Uterus (tissue), 4 donors: ENCODE measurements at regions of chr7 and their contacts with region 1.

Region 1: DNA sequence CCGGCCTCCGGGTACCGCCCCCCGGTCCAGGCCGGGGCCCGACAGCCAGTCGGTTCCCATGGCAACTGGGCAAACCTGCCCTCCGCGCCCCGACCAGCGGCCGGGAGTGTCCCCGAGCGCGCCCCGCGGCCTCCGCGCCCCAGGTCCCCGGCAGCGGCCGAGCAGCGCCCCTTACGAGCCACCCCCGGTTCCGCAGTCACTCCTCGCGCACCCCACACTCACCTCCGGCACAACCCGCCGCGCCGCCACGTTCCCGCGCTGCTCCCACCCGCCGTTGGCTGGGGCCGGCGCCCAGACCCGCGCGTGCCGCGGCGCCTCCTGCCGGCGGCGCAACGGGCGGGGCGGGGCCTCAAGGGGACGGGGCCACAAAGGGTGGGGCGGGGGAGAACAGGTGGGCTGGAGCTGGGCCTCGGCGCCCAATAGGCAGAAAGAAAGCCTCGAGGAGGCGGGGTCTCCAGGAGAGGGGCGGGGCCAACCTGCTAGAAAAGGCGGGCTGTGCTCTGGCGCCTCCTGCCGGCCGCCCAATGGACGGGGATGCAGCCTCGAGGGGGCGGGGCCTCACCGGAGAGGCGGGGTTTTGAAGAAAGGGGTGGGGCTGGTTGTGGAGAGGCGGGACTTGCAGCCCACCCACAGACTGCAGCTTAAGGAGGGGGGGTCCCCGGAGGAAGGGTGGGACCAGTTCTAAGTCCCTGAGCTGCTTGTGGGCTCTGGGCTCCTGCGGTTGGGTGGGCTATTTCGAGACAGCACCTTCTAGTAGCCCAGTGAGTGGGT is at the start of gene RADIL:
- DNase-seq: peak; percentile 96 to 97
- H3K4me3 ChIP-seq: peak within 1 kb of the TSS; percentile 36 to 54
- H3K27ac ChIP-seq: peak within 1 kb of the TSS; percentile 86 to 87
- H3K4me1 ChIP-seq: no peaks in the 10 kb centered on the region
- H3K27me3 ChIP-seq: no peaks in the 10 kb centered on the region
- CTCF ChIP-seq: peak; percentile 82 to 91 (median 86)
- POLR2A ChIP-seq: peak in 1 of 2 donors; percentile 53
- total RNA-seq, gene RADIL: 1.0 to 10.1 (median 6.6) TPM

Region 2: GRCh38 chr7:4797858-4798705 is 85.5 kb before region 1 on chr7:
- intact Hi-C with region 1: loop called (anchors 10 kb)
- DNase-seq: peak in 1 of 2 donors; percentile 63
- H3K4me3 ChIP-seq: no peak overlapping the region
- H3K27ac ChIP-seq: no peak overlapping the region
- H3K4me1 ChIP-seq: no peaks in the 10 kb centered on the region
- H3K27me3 ChIP-seq: no peaks in the 10 kb centered on the region
- CTCF ChIP-seq: peak; percentile 82 to 94 (median 90)
- POLR2A ChIP-seq: no peak